Sigmoid colon (tissue), 7 donors: ENCODE measurements at regions of chr17 and their contacts with region 1.

Region 1: DNA sequence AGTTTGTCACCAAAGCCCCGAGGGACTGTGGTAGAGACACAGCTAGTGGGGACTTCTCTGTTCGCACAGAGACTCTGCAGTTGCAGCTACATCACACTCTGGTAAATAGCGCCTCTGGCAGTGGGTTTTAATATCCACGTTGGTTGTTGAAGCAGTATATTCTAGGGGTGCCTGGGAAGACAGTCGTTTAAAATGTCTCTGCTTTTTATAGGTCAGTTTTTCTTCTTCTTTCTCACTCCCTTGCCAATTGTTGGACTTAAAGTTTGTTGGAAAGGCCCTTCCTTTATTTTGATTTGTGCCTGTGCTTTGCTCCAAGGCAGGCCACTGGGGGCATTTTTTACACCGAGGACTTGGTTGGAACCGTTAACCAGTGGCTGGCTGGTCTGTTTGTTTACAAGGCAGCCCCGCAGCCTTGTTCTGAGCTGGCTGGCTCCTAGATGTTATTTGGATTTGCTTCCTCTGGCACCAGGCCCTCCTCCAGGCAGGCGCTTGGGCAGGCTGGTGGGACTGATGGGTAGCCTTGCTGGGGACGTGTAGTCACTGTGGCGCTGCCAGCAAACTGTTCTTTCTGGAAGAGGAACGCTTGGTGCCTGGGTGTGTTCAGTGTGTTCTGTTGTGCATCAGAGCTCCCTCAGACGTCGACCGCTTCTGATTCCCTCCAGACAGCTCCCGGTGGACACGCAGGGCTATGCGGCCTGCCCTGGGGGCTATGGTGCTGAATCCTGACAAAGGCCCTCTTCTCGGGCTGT is 218.2 kb upstream of the CHMP6 start:
- DNase-seq: peak; percentile 98
- H3K4me3 ChIP-seq: peak overlapping the region in 1 of 4 donors; percentile 9
- H3K27ac ChIP-seq: peak overlapping the region; percentile 75 to 86 (median 82)
- H3K4me1 ChIP-seq: peaks cover 0 to 49% (median 38%) of the 10 kb centered on the region in 4 donors
- H3K27me3 ChIP-seq: no peaks in the 10 kb centered on the region
- CTCF ChIP-seq: peak in 3 of 4 experiments; percentile 31 to 36 (median 32)
- EP300 ChIP-seq: peak in 3 of 4 donors; percentile 53 to 85 (median 64)
- POLR2A ChIP-seq: no peak

Region 2: DNA sequence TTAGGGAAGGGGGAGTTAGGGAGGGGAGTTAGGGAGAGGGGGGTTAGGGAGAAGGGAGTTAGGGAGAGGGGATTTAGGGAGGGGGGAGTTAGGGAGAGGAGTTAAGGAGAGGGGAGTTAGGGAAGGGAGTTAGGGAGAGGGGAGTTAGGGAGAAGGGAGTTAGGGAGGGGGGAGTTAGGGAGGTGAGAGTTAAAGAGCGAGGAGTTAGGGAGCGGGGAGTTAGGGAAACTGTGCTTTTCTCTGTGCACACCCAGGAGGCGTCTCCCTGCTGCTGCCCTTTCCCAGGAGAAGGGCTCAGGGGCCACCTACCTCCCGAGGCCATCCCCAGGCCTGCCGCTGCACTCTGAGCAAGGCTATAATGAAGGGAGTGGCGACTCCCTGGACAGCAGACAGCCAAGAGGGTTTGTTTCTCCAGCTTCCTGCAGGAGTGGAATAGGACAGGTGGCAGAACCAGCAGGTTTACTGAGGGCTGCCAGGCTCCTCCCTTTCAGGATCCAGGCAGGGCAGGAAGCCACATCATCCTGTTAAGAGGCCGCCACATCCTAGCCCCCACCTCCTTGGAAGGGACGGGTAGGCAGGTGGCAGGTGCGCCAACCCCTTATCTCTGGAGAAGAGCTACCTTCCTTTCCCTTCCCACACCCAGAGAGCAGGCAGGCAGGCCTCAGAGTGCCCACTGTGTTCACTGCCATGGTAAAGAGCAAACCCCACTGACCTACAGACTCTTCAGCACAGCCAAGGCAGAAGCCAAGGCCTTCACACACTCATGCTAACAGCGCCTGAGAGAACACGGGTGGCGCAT is 1768.2 kb before region 1 on chr17:
- intact Hi-C with region 1: no loop called
- DNase-seq: peak; percentile 54
- H3K4me3 ChIP-seq: no peak overlapping the region
- H3K27ac ChIP-seq: no peak overlapping the region
- H3K4me1 ChIP-seq: peaks cover 0 to 41% (median 30%) of the 10 kb centered on the region in 4 donors
- H3K27me3 ChIP-seq: no peaks in the 10 kb centered on the region
- CTCF ChIP-seq: no peak
- EP300 ChIP-seq: no peak
- POLR2A ChIP-seq: peak in 1 of 2 donors; percentile 72

Region 3: DNA sequence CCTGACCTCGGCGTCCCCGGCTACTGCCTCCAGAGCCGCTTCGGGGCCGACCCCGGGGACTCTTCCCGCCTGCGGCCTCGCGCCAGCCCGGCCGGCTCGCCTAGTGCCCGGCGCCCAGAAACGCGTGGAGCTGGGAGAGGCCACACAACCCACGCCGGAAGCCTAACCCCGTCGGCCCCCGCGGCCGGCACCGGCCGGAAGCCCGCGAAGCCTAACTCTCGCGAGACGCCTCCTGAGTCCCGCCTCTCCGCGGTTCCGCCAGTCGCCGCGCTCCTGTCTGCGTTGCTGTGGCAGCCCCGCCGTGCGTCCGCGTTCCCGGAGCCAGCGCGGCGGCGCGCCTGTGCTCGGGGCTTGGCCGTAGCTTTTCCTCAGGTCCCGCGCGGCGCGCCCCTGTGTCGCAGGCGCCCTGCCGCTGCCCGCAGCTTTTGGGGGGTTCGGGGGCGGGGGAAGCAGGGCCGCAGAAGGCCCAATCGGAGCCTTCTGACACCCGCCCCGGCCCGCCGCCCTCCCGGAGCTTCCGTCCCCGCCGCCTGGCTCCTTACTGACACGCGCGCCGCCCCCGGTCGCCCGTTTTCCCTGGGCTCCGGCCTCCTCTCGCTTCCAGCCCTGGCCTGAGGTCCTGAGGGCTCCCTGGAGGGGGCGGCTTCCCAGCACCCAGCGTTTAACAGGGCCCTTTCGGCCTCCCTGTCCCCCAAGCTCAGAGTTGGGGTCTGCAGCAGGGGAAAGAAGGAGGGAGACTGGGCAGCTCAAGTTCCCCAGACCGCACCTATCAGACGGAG is 318.7 kb before region 1 on chr17:
- intact Hi-C with region 1: loop called (anchors 5 kb)
- DNase-seq: peak; percentile 98
- H3K4me3 ChIP-seq: peak overlapping the region; percentile 67 to 84 (median 80)
- H3K27ac ChIP-seq: peak overlapping the region; percentile 99
- H3K4me1 ChIP-seq: peaks cover 0 to 74% (median 54%) of the 10 kb centered on the region in 4 donors
- H3K27me3 ChIP-seq: no peaks in the 10 kb centered on the region
- CTCF ChIP-seq: no peak
- EP300 ChIP-seq: no peak
- POLR2A ChIP-seq: peak; percentile 59 to 73

Region 4: GRCh38 chr17:80663781-80664206 is 109.6 kb before region 1 on chr17:
- intact Hi-C with region 1: loop called (anchors 5 kb)
- DNase-seq: peak; percentile 88
- H3K4me3 ChIP-seq: no peak overlapping the region
- H3K27ac ChIP-seq: peak overlapping the region; percentile 10 to 79 (median 76)
- H3K4me1 ChIP-seq: peaks cover 0 to 25% (median 21%) of the 10 kb centered on the region in 4 donors
- H3K27me3 ChIP-seq: no peaks in the 10 kb centered on the region
- CTCF ChIP-seq: no peak
- EP300 ChIP-seq: peak in 1 of 4 donors; percentile 17
- POLR2A ChIP-seq: no peak

Region 5: DNA sequence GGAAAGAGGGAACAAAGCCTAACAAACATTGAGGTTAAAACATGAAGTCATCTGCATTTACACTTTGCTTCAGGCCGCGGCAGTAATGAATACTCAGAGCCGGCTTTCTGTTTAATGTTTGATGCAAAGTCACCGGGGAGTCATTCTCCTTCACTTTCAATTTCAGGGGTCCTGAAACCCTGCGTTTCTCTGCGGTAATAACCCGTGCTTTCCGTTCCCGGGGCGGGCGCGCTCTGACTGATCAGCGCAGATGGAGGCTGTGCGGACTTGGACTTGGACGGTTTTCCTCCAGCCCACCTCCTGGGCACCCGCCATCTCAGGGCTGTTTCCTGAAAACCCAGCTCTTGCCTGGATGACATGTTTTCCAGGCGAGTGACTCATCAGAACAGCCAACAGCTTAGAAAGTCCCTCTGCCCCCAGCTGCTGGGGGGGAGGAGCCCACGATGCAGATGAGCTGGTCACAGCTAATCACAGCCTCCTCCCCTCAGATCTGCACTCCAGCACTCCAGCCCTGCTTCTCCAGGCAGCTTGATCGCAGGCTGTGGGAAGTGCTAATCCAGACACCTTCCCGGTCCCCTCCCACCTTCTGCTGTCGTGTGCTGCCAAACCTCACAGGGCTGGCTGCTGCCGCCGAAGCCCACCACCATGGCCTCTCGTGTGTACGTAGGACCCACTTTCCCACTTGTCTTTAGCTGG is 59.6 kb after region 1 on chr17:
- intact Hi-C with region 1: loop called (anchors 2 kb)
- DNase-seq: peak; percentile 97
- H3K4me3 ChIP-seq: peak overlapping the region; percentile 35 to 56 (median 52)
- H3K27ac ChIP-seq: peak overlapping the region; percentile 89 to 93 (median 91)
- H3K4me1 ChIP-seq: peaks cover 0 to 26% (median 22%) of the 10 kb centered on the region in 4 donors
- H3K27me3 ChIP-seq: no peaks in the 10 kb centered on the region
- CTCF ChIP-seq: no peak
- EP300 ChIP-seq: peak in 1 of 4 donors; percentile 61
- POLR2A ChIP-seq: peak; percentile 58 to 75

Region 6: GRCh38 chr17:80855948-80856862 is 82.8 kb after region 1 on chr17:
- intact Hi-C with region 1: loop called (anchors 5 kb)
- DNase-seq: peak; percentile 90
- H3K4me3 ChIP-seq: no peak overlapping the region
- H3K27ac ChIP-seq: peak overlapping the region; percentile 22 to 76 (median 63)
- H3K4me1 ChIP-seq: peaks cover 0 to 48% (median 37%) of the 10 kb centered on the region in 4 donors
- H3K27me3 ChIP-seq: no peaks in the 10 kb centered on the region
- CTCF ChIP-seq: no peak
- EP300 ChIP-seq: peak in 1 of 4 donors; percentile 79
- POLR2A ChIP-seq: no peak

Region 7: GRCh38 chr17:80866147-80866793 is 92.9 kb after region 1 on chr17:
- intact Hi-C with region 1: no loop called
- DNase-seq: peak; percentile 83
- H3K4me3 ChIP-seq: no peak overlapping the region
- H3K27ac ChIP-seq: no peak overlapping the region
- H3K4me1 ChIP-seq: peaks cover 0 to 13% (median 11%) of the 10 kb centered on the region in 4 donors
- H3K27me3 ChIP-seq: no peaks in the 10 kb centered on the region
- CTCF ChIP-seq: peak; percentile 46 to 83 (median 78)
- EP300 ChIP-seq: no peak
- POLR2A ChIP-seq: no peak

Region 8: DNA sequence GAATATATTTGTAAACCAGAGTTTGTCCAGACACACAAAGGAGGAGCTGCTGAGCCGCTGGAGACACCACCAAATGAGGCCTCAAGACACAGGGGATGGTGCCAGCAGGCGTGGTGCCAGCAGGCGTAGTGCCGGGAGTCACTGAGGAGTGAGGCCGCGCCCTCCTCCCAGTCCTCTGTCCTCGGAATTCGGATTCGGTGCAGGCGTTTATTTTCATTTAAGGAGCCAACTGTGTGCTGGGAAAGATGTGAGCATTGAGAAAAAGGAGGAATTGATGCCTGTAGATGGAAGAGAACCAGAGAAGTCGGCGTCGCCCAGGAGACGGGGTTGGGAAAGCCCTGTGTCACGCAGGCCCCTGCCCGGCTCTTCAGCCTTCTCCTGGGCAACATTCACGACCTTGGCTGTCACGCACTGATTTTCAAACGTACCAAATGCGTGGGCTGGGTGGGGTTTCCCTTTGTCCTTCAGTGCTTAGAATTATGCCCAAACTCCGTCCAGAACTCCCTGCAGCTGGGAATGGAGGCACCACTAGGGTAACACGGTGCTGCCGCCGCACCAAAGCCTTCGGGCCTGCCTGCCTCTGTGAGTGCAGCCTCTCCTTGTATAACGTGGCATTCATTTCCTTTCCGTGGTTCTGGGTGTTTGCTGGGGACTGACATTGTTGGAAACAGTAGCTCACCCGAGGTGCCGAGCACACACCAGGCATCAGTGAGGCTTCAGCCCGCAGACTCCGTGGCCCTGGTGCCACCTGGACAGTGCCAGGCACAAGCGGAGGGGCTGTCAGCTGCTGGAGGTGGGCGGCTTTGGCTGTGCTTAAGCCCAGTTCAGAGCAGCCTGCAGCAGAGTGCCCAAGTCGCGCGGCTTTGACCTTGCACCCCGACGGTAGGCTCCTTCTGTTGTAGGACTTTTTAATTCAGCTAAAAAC is 169.3 kb after region 1 on chr17:
- intact Hi-C with region 1: loop called (anchors 5 kb)
- DNase-seq: peak; percentile 99
- H3K4me3 ChIP-seq: peak overlapping the region in 1 of 4 donors; percentile 3
- H3K27ac ChIP-seq: peak overlapping the region; percentile 88 to 94 (median 90)
- H3K4me1 ChIP-seq: peaks cover 0 to 47% (median 39%) of the 10 kb centered on the region in 4 donors
- H3K27me3 ChIP-seq: no peaks in the 10 kb centered on the region
- CTCF ChIP-seq: no peak
- EP300 ChIP-seq: no peak
- POLR2A ChIP-seq: no peak

Region 9: GRCh38 chr17:80959330-80960036 is 186.1 kb after region 1 on chr17:
- intact Hi-C with region 1: loop called (anchors 5 kb)
- DNase-seq: peak; percentile 98
- H3K4me3 ChIP-seq: peak overlapping the region in 1 of 4 donors; percentile 6
- H3K27ac ChIP-seq: peak overlapping the region; percentile 91 to 93 (median 91)
- H3K4me1 ChIP-seq: peaks cover 0 to 46% (median 44%) of the 10 kb centered on the region in 4 donors
- H3K27me3 ChIP-seq: no peaks in the 10 kb centered on the region
- CTCF ChIP-seq: no peak
- EP300 ChIP-seq: peak in 3 of 4 donors; percentile 53 to 85 (median 77)
- POLR2A ChIP-seq: no peak

Region 10: GRCh38 chr17:81379523-81379942 is 606.1 kb after region 1 on chr17:
- intact Hi-C with region 1: no loop called
- DNase-seq: no peak
- H3K4me3 ChIP-seq: no peak overlapping the region
- H3K27ac ChIP-seq: no peak overlapping the region
- H3K4me1 ChIP-seq: no peaks in the 10 kb centered on the region
- H3K27me3 ChIP-seq: no peaks in the 10 kb centered on the region
- CTCF ChIP-seq: no peak
- EP300 ChIP-seq: no peak
- POLR2A ChIP-seq: peak in 1 of 2 donors; percentile 12